ENCODE measurements at regions of chr6 and their contacts with region 1.

Region 1: GRCh38 chr6:18457065-18457812 is 70.1 kb downstream of the RNF144B start:
- DNase-seq: no peak
- H3K4me3 ChIP-seq: no peak overlapping the region
- H3K27ac ChIP-seq: no peak overlapping the region
- H3K4me1 ChIP-seq: no peaks in the 10 kb centered on the region
- H3K27me3 ChIP-seq: no peaks in the 10 kb centered on the region
- CTCF ChIP-seq: no peak
- EP300 ChIP-seq: no peak
- POLR2A ChIP-seq: no peak

Region 2: GRCh38 chr6:18491308-18492045 is 34.2 kb after region 1 on chr6:
- intact Hi-C with region 1: loop called (anchors 2 kb)
- DNase-seq: peak; percentile 60
- H3K4me3 ChIP-seq: no peak overlapping the region
- H3K27ac ChIP-seq: no peak overlapping the region
- H3K4me1 ChIP-seq: no peaks in the 10 kb centered on the region
- H3K27me3 ChIP-seq: no peaks in the 10 kb centered on the region
- CTCF ChIP-seq: no peak
- EP300 ChIP-seq: no peak
- POLR2A ChIP-seq: no peak

Measured in esophagus muscularis mucosa (tissue), 4 donors.